ENCODE measurements at regions of chr10 and their contacts with region 1.

Region 1: DNA sequence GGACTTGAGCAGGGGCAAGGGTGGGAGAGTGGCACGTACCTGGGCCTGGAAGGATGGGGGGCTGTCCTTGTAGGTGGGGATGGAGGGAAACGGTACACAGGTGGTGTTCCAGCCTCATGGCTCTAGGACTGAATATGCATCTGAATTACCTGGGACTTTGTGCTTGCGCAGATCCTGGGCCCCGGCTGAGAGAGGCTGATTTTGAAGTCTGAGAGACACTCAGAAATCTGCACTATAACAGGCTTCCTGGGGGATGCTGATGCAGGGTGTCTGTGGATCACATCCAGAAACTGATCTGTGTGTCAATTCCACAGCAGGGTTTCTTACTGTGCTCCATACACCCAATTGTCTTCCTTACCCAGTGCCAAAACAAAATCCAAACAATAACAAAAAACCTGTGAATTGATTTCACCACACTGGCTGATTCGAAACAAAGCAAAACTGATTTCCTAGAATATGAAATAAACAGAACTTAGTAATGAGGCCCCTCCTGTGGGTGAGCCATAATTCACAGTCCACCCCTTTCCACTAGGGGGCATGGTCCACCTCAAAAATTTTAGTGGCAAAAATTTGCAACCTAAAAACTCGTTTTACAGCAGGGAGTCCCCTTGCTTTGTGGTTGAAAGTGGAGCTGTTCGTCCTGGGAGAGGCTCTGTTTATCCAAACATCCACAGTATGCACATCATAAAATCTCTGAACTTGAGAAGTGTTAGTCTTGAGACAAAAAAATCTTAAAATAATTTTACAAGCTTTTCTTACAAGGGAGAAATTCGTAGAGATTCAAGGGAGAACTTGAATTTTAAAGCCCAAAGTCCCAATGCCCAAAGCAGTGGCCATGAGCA is 32.0 kb upstream of the PLEKHA1 start:
- DNase-seq: peak; percentile 39
- ATAC-seq: peak; percentile 42 to 58

Region 2: GRCh38 chr10:122172317-122173008 is 170.1 kb before region 1 on chr10:
- intact Hi-C with region 1: no loop called
- DNase-seq: no peak
- ATAC-seq: peak in 1 of 2 donors; percentile 7

Region 3: GRCh38 chr10:122298598-122299301 is 43.8 kb before region 1 on chr10:
- intact Hi-C with region 1: loop called in 1 of 2 experiments (anchors 5 kb)
- DNase-seq: peak; percentile 73
- ATAC-seq: peak; percentile 77 to 89

Region 4: GRCh38 chr10:122368502-122369256 is 26.2 kb after region 1 on chr10:
- intact Hi-C with region 1: loop called in 1 of 2 experiments (anchors 2 kb)
- DNase-seq: no peak
- ATAC-seq: no peak

Region 5: DNA sequence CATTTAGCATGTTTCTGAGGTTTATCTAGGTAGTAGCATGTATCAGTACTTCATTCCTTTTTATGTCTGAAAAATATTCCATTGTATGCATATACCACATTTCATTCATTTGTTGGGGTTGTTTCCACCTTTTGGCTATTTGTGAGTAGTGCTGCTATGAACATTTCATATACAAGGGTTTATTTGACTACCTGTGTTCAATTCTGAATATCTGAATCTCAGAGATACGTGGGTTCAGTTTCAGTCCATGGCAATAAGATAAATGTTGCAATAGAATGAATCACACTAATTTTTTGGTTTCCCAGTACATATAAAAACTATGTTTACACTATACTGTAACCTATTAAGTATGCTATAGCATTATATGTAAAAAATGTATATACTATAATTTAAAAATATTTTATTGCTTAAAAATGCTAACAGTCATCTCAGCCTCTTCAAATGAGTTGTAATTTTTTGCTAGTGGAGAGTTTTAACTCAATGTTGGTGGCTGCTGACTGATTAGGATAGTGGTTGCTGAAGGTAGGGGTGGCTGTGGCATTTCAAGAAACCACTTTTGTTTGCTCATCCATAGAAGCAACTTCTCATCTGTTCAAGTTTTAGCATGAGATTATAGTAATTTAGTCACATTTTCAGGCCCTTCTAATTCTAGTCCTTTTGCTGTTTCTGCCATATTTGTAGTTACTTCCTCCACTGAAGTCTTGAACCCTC is 45.9 kb after region 1 on chr10:
- intact Hi-C with region 1: loop called in 1 of 2 experiments (anchors 5 kb)
- DNase-seq: no peak
- ATAC-seq: no peak

Region 6: GRCh38 chr10:122435212-122435827 is 92.8 kb after region 1 on chr10:
- intact Hi-C with region 1: loop called (anchors 5 to 10 kb)
- DNase-seq: no peak
- ATAC-seq: peak in 1 of 2 donors; percentile 39

Region 7: DNA sequence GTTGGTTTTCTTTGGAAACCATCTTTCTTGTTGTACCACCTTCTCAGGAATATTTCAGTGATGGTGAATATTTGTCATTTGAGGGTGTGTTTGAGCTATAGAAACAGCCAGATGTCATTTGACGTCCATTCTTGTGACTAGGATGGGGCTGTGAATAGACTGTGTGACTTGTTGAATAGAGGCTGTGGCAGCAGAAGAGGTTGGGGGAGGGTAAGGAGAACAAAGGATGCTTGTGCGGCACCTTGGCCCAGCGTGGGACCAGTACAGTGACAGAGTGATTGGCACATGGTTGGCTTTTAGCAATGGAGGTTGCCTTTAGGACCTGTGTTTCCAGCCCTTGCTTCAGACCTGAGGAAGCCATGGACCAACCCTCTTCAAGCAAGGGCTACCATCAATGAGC is 229.4 kb after region 1 on chr10:
- intact Hi-C with region 1: loop called (anchors 5 kb)
- DNase-seq: no peak
- ATAC-seq: no peak

Measured in left cardiac atrium (tissue), 4 donors.